ENCODE measurements at regions of chr17 and their contacts with region 1.

Region 1: GRCh38 chr17:63478791-63479494 is 2.1 kb downstream of the ACE start:
- DNase-seq: peak; percentile 89 to 91
- H3K4me3 ChIP-seq: no peak overlapping the region
- H3K4me3 Mint-ChIP-seq: peak overlapping the region; percentile 50
- H3K27ac Mint-ChIP-seq: no peak overlapping the region
- H3K4me1 ChIP-seq: peaks cover 13% of the 10 kb centered on the region
- H3K4me1 Mint-ChIP-seq: peaks cover 10% of the 10 kb centered on the region
- H3K27me3 ChIP-seq: no peaks in the 10 kb centered on the region
- H3K27me3 Mint-ChIP-seq: peaks cover 12% of the 10 kb centered on the region
- CTCF ChIP-seq: peak; percentile 67 to 97

Region 2: DNA sequence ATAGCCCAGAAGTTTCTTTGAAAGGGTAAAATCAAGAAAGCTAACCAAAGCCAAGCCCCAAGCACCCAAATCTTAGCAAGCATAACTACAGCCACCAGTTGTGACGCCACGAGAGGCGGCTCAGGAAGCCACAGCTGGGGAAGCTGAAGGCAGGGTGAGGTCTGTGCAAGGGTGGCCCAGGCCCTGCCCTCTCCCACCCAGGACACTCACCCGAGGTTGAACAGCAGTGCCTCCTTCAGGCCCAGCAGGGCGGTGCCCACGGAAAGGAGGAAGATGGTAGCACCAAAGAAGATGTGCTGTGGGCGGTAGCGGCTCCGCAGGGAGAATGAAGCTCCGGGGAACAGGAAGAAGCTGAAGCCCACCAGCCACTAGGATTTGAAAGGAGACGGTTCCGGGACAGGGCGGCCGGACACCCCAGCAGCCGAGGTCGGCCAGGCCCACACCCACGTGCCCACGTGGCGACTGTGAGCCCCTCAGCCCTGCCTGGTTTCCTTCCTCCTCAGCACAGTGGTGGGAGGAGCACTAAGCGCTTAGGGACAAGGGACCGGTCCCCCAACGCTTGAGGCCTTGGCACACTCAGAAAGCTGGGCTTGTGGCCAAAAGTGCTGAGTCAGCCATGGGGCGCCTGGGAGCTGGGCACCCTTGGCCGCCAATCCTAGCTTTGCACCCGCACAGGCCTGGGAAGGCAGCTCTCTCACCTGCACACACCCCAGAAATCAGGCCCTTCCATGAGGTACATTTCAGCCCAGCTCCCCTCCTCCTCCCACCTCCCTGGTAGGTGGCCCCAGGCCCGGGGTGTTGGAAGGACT is 43.9 kb before region 1 on chr17:
- CTCF ChIA-PET with region 1: interaction called, 10 read pairs
- POLR2A ChIA-PET with region 1: no interaction called
- intact Hi-C with region 1: no loop called
- DNase-seq: no peak
- H3K4me3 ChIP-seq: no peak overlapping the region
- H3K4me3 Mint-ChIP-seq: no peak overlapping the region
- H3K27ac Mint-ChIP-seq: no peak overlapping the region
- H3K4me1 ChIP-seq: peaks cover 15% of the 10 kb centered on the region
- H3K4me1 Mint-ChIP-seq: peaks cover 21% of the 10 kb centered on the region
- H3K27me3 ChIP-seq: no peaks in the 10 kb centered on the region
- H3K27me3 Mint-ChIP-seq: no peaks in the 10 kb centered on the region
- CTCF ChIP-seq: no peak

Region 3: GRCh38 chr17:63458478-63458877 is 20.5 kb before region 1 on chr17:
- CTCF ChIA-PET with region 1: no interaction called
- POLR2A ChIA-PET with region 1: no interaction called
- intact Hi-C with region 1: no loop called
- DNase-seq: no peak
- H3K4me3 ChIP-seq: no peak overlapping the region
- H3K4me3 Mint-ChIP-seq: no peak overlapping the region
- H3K27ac Mint-ChIP-seq: no peak overlapping the region
- H3K4me1 ChIP-seq: peaks cover 5% of the 10 kb centered on the region; the same call in 1 of the 2 replicates
- H3K4me1 Mint-ChIP-seq: peaks cover 5% of the 10 kb centered on the region
- H3K27me3 ChIP-seq: no peaks in the 10 kb centered on the region
- H3K27me3 Mint-ChIP-seq: no peaks in the 10 kb centered on the region
- CTCF ChIP-seq: no peak

Region 4: DNA sequence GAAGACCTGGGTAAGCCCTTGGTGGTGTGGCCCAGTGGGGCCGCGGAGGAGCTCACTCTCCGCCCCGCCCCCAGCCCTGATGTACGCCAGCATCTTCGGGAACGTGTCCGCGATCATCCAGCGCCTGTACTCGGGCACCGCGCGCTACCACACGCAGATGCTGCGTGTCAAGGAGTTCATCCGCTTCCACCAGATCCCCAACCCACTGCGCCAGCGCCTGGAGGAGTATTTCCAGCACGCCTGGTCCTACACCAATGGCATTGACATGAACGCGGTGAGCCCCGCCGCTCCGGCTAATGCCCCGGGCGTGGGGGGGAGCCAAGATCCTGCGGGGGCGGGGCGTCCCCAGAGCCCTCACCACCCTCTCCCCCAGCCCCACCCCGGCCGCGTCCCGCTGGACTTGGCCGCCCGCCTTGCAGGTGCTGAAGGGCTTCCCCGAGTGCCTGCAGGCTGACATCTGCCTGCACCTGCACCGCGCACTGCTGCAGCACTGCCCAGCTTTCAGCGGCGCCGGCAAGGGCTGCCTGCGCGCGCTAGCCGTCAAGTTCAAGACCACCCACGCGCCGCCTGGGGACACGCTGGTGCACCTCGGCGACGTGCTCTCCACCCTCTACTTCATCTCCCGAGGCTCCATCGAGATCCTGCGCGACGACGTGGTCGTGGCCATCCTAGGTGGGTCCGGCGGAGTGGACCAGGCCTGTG is 59.2 kb after region 1 on chr17:
- CTCF ChIA-PET with region 1: no interaction called
- POLR2A ChIA-PET with region 1: no interaction called
- intact Hi-C with region 1: no loop called
- DNase-seq: no peak
- H3K4me3 ChIP-seq: no peak overlapping the region
- H3K4me3 Mint-ChIP-seq: no peak overlapping the region
- H3K27ac Mint-ChIP-seq: no peak overlapping the region
- H3K4me1 ChIP-seq: no peaks in the 10 kb centered on the region
- H3K4me1 Mint-ChIP-seq: no peaks in the 10 kb centered on the region
- H3K27me3 ChIP-seq: no peaks in the 10 kb centered on the region; the same call in 1 of the 2 replicates
- H3K27me3 Mint-ChIP-seq: peaks cover 16% of the 10 kb centered on the region
- CTCF ChIP-seq: no peak

Region 5: GRCh38 chr17:63611354-63611753 is 132.4 kb after region 1 on chr17:
- CTCF ChIA-PET with region 1: interaction called, 8 read pairs
- POLR2A ChIA-PET with region 1: no interaction called
- intact Hi-C with region 1: loop called (anchors 2 kb)
- DNase-seq: no peak
- H3K4me3 ChIP-seq: no peak overlapping the region
- H3K4me3 Mint-ChIP-seq: no peak overlapping the region
- H3K27ac Mint-ChIP-seq: no peak overlapping the region
- H3K4me1 ChIP-seq: no peaks in the 10 kb centered on the region
- H3K4me1 Mint-ChIP-seq: no peaks in the 10 kb centered on the region
- H3K27me3 ChIP-seq: no peaks in the 10 kb centered on the region
- H3K27me3 Mint-ChIP-seq: peaks cover 3% of the 10 kb centered on the region
- CTCF ChIP-seq: no peak